Right ventricle myocardium inferior (tissue), 1 donor: ENCODE measurements at regions of chr9 and their contacts with region 1.

Region 1: DNA sequence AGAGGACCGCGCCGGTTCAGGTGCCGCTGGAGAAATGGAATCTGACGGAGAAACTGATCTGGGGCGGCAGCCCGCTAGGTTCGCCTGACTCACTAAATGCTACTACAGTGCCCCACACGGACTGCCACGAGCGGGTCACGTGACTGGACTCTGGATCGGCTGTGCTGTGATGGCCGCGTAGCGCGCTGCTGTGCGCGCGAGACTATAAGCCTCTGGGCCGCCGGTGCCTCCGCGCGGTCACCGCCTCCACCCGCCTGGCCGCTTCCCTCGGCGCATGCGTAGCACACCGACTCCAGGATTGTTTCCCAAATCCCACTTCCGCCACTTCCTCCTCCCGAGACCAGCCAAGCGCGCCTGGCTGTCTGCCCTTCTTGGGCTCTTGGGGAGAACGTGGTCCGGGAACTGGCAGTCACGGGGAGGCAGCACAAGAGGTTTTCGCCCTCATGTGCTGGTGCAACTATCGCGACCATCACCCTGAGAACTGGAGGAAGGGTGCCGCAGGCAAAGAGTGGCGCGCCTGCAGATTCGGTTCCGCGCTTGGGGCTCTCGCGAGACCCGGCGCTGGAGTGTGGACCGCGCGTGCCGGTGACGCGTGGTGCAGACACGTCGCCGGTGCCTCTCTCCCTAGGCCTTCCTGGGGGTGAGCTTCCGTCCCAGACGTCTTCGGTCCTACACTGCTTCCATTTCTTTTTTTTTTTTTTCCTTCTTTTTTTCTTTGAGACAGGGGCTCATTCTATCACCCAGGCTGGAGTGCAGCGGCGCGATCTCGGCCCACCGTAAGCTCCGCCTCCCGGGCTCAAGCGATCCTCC is 35.8 kb upstream of the GLDC start:
- DNase-seq: peak; percentile 98
- ATAC-seq: peak; percentile 99

Region 2: DNA sequence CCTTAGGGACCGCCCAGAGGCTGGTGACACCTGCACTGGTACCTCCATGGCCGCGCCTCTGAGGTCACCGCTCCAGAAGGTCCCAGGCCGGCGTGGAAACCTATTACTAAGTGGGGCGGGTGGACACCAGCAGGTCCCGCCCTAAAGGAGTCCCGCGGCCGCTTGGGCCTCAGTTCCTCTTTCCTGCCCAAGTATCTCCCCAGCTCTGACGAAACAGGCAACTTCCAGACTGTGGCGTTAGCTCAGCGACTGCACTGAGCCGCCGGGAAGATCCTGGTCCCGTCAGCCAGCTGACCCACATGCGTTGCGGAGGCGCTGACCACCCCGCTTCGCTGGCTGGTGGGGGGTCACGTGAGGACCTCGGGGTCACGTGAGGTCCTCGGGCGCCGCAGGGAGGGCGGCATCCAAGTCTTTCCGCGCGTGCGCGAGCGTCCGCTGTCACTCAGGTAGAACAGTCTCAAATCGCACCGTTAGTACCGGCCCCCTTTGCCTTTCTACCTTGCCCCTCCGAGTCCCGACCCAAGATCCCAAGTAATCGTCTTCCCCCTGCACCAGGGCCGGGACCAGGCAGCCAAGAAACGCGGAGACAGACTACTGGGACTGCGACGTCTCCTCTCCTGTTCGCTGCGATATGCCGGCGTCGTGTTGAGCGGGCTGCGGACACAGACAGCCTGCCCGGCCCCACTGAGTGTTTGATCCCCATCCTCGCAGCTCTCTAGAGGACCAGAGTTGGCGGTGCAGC is 22.7 kb after region 1 on chr9:
- intact Hi-C with region 1: loop called (anchors 1 kb)
- DNase-seq: peak; percentile 94
- ATAC-seq: peak; percentile 95

Region 3: DNA sequence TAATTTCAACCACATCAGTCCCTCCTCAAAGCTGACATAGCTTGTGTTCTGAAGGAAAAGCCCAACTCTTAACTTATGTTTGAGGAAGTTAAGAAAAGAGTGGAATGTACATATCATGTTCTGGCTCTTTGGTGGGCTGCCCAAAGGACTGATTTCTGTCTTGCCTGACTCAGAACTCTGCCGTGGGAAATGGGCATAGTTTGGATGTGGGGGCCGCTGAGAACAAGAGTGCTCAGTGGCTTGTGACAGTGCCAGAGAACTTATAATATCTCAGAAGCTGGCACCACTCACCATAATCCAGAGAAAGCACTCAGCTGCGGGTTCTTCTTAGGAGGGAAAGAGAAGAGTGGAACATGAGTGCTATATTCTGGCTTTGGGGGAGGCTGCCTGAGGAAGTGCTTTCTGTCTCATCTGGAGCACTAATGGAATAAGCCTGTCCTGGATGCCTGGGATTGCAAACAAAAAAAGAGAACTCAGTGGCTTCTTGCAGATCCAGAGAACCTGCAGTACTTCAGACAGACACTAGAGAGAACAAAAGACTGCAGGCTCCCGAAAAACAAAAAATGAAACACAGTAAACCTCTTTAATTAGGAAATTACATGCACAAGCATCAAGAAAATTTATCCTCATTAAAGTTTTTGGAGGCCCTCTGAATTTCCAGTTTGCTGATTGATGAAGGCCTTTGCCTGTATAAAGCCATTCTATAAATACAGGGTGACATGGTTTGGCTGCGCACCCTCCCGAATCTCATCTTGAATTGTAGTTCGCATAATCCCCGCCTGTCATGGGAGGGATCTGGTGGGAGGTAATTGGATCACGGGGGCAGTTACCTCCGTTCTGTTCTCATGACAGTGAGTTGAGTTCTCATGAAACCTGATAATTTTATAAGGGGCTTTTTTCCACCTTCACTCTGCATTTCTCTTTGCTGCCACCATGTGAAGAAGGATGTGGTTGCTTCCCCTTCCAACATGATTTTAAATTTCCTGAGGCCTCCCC is 911.3 kb after region 1 on chr9:
- intact Hi-C with region 1: no loop called
- DNase-seq: no peak
- ATAC-seq: no peak